Activated B cell treated with CpG ODN at 0.5 μM for 24 hours (primary cell): ENCODE measurements at regions of chrX and their contacts with region 1.

Region 1: DNA sequence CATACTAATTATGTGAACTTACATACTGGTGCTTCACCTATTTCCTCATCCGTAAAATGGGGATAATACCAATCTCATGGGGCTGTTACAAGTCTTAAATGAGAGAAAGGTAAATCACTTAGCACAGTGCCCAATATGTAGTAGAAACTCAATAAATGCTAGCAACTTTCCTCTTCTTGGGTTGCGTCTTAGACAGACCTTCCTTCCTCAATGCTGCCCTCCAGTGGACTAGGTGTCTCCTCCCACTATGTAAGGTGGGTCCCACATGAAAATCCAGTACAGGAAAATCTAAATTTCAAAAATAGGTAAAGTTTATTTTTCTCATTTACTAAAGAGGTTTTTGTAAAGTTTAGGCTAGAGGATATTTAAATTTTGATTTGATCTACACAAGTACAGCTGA is 20.6 kb downstream of the ZDHHC9 start:
- DNase-seq: no peak
- ATAC-seq: peak; percentile 62
- H3K4me3 Mint-ChIP-seq: no peak overlapping the region
- H3K27ac Mint-ChIP-seq: no peak overlapping the region
- H3K4me1 Mint-ChIP-seq: peaks cover 10% of the 10 kb centered on the region
- H3K27me3 Mint-ChIP-seq: no peaks in the 10 kb centered on the region
- CTCF ChIP-seq: no peak

Region 2: GRCh38 chrX:129606918-129607317 is 216.2 kb before region 1 on chrX:
- CTCF ChIA-PET with region 1: interaction called, 5 read pairs
- POLR2A ChIA-PET with region 1: no interaction called
- intact Hi-C with region 1: loop called (anchors 2 kb)
- DNase-seq: no peak
- ATAC-seq: peak; percentile 61
- H3K4me3 Mint-ChIP-seq: no peak overlapping the region
- H3K27ac Mint-ChIP-seq: no peak overlapping the region
- H3K4me1 Mint-ChIP-seq: peaks cover 19% of the 10 kb centered on the region
- H3K27me3 Mint-ChIP-seq: no peaks in the 10 kb centered on the region
- CTCF ChIP-seq: no peak

Region 3: DNA sequence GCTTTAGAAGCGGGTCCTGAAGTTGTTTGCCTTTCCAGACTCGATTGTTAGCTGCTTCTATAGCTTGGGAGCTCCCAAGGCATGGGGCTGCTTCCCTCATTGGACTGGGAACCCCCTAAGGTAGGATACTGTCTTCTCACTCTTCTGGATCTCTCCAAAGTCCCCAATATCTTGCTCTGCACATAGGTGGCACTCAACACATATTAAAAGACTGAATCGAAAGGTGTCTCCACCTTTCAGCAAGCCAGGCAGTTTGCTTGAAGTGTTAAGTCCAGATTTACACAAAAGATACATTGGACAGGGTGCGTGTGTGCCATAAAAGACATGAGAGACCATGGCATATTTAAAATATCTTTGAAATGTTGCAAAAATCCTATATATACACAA is 167.3 kb before region 1 on chrX:
- CTCF ChIA-PET with region 1: interaction called, 3 read pairs
- POLR2A ChIA-PET with region 1: no interaction called
- intact Hi-C with region 1: loop called (anchors 1 kb)
- DNase-seq: no peak
- ATAC-seq: no peak
- H3K4me3 Mint-ChIP-seq: peak overlapping the region; percentile 56
- H3K27ac Mint-ChIP-seq: no peak overlapping the region
- H3K4me1 Mint-ChIP-seq: peaks cover 11% of the 10 kb centered on the region
- H3K27me3 Mint-ChIP-seq: peaks cover 12% of the 10 kb centered on the region
- CTCF ChIP-seq: no peak

Region 4: GRCh38 chrX:129737916-129738315 is 85.2 kb before region 1 on chrX:
- CTCF ChIA-PET with region 1: interaction called, 4 read pairs
- POLR2A ChIA-PET with region 1: no interaction called
- intact Hi-C with region 1: loop called (anchors 1 kb)
- DNase-seq: no peak
- ATAC-seq: peak; percentile 79
- H3K4me3 Mint-ChIP-seq: no peak overlapping the region
- H3K27ac Mint-ChIP-seq: peak overlapping the region; percentile 63
- H3K4me1 Mint-ChIP-seq: peaks cover 36% of the 10 kb centered on the region
- H3K27me3 Mint-ChIP-seq: no peaks in the 10 kb centered on the region
- CTCF ChIP-seq: no peak

Region 5: GRCh38 chrX:129786210-129786651 is 36.9 kb before region 1 on chrX:
- CTCF ChIA-PET with region 1: interaction called, 3 read pairs
- POLR2A ChIA-PET with region 1: no interaction called
- intact Hi-C with region 1: loop called (anchors 2 kb)
- DNase-seq: no peak
- ATAC-seq: peak; percentile 73
- H3K4me3 Mint-ChIP-seq: peak overlapping the region; percentile 77
- H3K27ac Mint-ChIP-seq: peak overlapping the region; percentile 85
- H3K4me1 Mint-ChIP-seq: peaks cover 64% of the 10 kb centered on the region
- H3K27me3 Mint-ChIP-seq: no peaks in the 10 kb centered on the region
- CTCF ChIP-seq: no peak